A673 (cell line): ENCODE measurements at regions of chr12 and their contacts with region 1.

Region 1: DNA sequence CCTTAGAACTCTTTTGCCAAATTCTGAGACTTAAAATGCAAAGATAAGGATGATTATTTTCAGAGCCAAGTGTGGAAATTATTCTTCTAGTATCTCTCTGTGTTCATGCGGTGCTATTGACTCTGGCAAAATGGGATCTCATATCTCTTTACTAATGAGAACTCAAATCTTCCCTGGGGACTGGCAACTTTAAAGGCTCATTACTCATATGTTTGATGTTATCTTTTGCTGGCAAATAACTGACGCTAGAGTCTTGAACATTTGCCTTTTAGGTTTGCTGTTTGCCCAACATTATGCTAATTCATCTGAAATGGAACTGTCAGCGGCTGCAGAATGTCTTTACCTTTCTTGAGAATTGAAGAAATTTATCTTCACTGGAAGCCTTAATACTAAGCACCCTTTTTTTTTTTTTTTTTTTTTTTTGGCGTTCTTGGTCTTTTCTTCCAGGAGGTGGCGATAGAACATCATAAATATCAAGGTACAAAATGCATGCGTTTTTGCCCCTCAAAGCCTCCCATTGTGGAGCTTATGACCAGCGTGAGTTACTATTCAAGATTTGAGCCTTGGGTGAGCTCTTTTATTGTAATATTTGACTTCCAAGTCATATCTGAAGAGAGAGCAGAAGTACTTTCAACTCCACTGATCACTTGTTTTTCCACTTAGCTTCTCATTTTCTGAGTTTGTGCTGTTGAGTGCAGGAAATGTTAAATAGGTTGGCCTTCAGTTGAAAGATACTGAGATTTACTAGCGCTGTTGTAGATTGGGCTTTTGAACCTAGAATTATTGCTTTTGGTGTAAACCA is 86.6 kb downstream of the CAND1 start:
- DNase-seq: peak; percentile 73
- H3K4me3 ChIP-seq: no peak overlapping the region
- H3K27ac ChIP-seq: no peak overlapping the region
- H3K4me1 ChIP-seq: peaks cover 16% of the 10 kb centered on the region
- H3K27me3 ChIP-seq: peaks cover 18% of the 10 kb centered on the region
- CTCF ChIP-seq: peak; percentile 73

Region 2: GRCh38 chr12:67161322-67161918 is 194.4 kb before region 1 on chr12:
- CTCF ChIA-PET with region 1: interaction called, 22 read pairs
- POLR2A ChIA-PET with region 1: no interaction called
- intact Hi-C with region 1: no loop called
- DNase-seq: peak; percentile 62
- H3K4me3 ChIP-seq: no peak overlapping the region
- H3K27ac ChIP-seq: no peak overlapping the region
- H3K4me1 ChIP-seq: no peaks in the 10 kb centered on the region
- H3K27me3 ChIP-seq: peaks cover 19% of the 10 kb centered on the region
- CTCF ChIP-seq: peak; percentile 70

Region 3: DNA sequence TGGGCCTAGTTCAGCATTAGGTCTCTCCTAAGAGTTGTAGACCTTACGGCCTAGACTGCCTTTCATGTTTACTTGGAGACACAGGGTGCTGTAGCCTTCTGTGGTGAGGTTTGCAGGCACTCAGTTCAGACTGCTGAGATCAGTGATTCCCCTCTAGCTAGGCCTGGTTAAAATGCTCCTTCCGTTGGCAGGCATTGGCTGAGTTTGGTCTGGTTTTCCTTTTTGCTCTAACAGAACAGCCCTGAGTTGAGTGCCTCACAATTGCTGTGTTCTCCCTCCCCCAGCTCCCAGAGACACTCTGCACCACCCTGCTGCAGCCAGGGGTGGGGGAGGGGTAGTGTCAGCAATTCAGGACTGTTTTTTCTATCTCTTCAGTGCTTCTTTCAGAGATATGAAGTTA is 113.9 kb after region 1 on chr12:
- CTCF ChIA-PET with region 1: interaction called, 12 read pairs
- POLR2A ChIA-PET with region 1: no interaction called
- intact Hi-C with region 1: no loop called
- DNase-seq: no peak
- H3K4me3 ChIP-seq: no peak overlapping the region
- H3K27ac ChIP-seq: no peak overlapping the region
- H3K4me1 ChIP-seq: no peaks in the 10 kb centered on the region
- H3K27me3 ChIP-seq: no peaks in the 10 kb centered on the region
- CTCF ChIP-seq: no peak

Region 4: DNA sequence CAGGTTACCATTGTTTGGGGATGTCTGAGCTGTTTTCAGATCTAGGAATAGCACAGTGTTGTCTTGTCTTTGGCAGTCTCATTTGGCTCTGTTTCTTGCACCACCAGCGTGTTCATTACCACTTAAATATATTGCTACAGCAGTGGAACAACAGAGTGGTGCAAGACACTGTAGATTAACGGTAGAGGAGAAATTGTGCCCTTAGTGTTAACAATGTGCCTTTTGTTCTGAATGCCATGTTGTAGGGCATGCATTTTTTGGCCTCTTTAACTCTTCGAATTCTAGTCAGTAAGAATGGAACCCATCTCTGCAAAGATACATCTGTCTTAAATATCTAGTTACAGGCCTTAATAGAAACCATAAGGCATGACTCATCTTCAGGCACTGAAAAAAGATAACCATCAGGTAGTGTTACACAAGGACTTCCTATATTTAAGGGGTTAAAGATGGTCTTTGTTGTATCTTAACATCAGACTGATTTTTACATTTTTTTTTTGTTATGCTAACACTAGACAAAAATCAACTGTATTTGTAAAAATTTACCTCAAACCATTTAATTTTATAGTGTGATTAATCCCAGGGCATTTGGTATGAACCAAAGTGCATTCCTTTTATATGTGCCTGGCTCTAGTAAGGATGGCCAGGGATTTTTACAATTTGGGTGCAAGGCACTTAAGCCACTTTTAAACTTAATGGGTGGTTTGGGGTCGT is 305.7 kb after region 1 on chr12:
- CTCF ChIA-PET with region 1: interaction called, 13 read pairs
- POLR2A ChIA-PET with region 1: no interaction called
- intact Hi-C with region 1: no loop called
- DNase-seq: peak; percentile 85
- H3K4me3 ChIP-seq: no peak overlapping the region
- H3K27ac ChIP-seq: no peak overlapping the region
- H3K4me1 ChIP-seq: peaks cover 16% of the 10 kb centered on the region
- H3K27me3 ChIP-seq: no peaks in the 10 kb centered on the region
- CTCF ChIP-seq: no peak

Region 5: GRCh38 chr12:67943226-67943892 is 587.6 kb after region 1 on chr12:
- CTCF ChIA-PET with region 1: interaction called, 39 read pairs
- POLR2A ChIA-PET with region 1: no interaction called
- intact Hi-C with region 1: loop called (anchors 1 kb)
- DNase-seq: peak; percentile 71
- H3K4me3 ChIP-seq: no peak overlapping the region
- H3K27ac ChIP-seq: no peak overlapping the region
- H3K4me1 ChIP-seq: no peaks in the 10 kb centered on the region
- H3K27me3 ChIP-seq: peaks cover 21% of the 10 kb centered on the region
- CTCF ChIP-seq: peak; percentile 76

Region 6: GRCh38 chr12:68317047-68317667 is 961.4 kb after region 1 on chr12:
- CTCF ChIA-PET with region 1: no interaction called
- POLR2A ChIA-PET with region 1: no interaction called
- intact Hi-C with region 1: loop called (anchors 2 kb)
- DNase-seq: peak; percentile 61
- H3K4me3 ChIP-seq: no peak overlapping the region
- H3K27ac ChIP-seq: no peak overlapping the region
- H3K4me1 ChIP-seq: peaks cover 3% of the 10 kb centered on the region
- H3K27me3 ChIP-seq: no peaks in the 10 kb centered on the region
- CTCF ChIP-seq: peak; percentile 70